Activated naive CD4-positive, alpha-beta T cell treated with anti-CD3 and anti-CD28 coated beads for 36 hours (primary cell): ENCODE measurements at regions of chr3 and their contacts with region 1.

Region 1: GRCh38 chr3:3179407-3180094 is at the start of gene CRBN:
- DNase-seq: peak; percentile 90
- H3K4me3 Mint-ChIP-seq: peak within 1 kb of the TSS; percentile 93
- H3K27ac Mint-ChIP-seq: peak within 1 kb of the TSS; percentile 93
- H3K4me1 Mint-ChIP-seq: peaks cover 47% of the 10 kb centered on the region
- H3K27me3 Mint-ChIP-seq: no peaks in the 10 kb centered on the region
- total RNA-seq, gene CRBN: 44.1 to 48.0 TPM

Region 2: GRCh38 chr3:2765002-2765579 is 414.5 kb before region 1 on chr3:
- CTCF ChIA-PET with region 1: no interaction called
- intact Hi-C with region 1: loop called (anchors 2 kb)
- DNase-seq: peak; percentile 34
- H3K4me3 Mint-ChIP-seq: no peak overlapping the region
- H3K27ac Mint-ChIP-seq: no peak overlapping the region
- H3K4me1 Mint-ChIP-seq: no peaks in the 10 kb centered on the region
- H3K27me3 Mint-ChIP-seq: peaks cover 2% of the 10 kb centered on the region

Region 3: DNA sequence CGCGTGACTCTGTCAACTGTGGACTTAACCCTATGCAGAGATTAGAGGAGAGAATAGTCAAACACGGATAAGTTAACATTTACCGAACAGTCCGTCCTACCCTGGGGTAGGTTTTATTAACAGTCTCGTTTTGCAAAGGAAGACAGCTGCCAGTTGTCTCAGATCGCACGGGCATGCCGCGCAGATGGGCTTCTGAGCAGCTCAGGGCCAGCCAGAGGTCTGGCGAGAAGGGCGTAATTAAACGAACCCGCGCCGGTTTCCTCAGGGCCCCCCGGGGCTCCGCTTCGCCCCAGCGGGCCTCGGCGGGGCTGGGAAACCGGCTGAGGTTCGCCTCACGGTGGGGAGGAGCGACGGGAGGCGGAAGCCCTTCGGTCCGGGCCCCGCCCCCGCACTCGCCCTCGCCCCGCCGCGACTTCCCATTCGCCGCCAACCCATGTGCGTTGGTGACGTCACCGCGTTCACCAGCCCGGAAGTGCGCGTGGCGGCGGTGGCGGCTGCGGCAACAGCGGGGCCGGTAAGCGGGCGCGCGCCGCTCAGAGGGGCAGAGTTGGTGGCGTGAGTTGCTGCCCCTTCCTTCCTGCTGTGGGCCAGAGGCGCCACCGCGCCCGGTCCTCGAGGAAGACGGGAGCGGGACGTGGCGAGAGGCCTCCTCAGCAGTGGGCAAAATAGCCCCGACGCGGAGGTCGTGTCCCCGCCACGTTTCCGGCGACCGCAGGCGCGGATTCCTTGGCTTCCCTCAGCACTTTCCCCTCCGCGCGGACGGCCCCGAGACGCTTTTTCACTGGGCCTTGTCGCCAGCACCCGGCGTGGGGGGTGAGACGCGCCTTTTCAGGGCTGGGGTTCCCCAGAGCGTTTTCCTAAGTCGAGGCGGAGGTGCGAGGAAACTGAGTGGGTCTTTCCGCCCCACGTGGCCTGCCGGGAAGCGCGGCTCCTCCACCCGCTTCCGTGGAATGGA is 52.8 kb before region 1 on chr3 and contains the start of gene TRNT1:
- CTCF ChIA-PET with region 1: interaction called, 6 read pairs
- intact Hi-C with region 1: loop called (anchors 1 kb)
- DNase-seq: peak; percentile 96
- H3K4me3 Mint-ChIP-seq: peak within 1 kb of the TSS; percentile 97
- H3K27ac Mint-ChIP-seq: peak within 1 kb of the TSS; percentile 98
- H3K4me1 Mint-ChIP-seq: peaks cover 36% of the 10 kb centered on the region
- H3K27me3 Mint-ChIP-seq: no peaks in the 10 kb centered on the region
- total RNA-seq, gene TRNT1: 42.3 to 49.4 TPM

Region 4: GRCh38 chr3:3191675-3192285 is 12.2 kb after region 1 on chr3:
- CTCF ChIA-PET with region 1: interaction called, 5 read pairs
- intact Hi-C with region 1: loop called (anchors 1 kb)
- DNase-seq: peak; percentile 26
- H3K4me3 Mint-ChIP-seq: peak overlapping the region; percentile 14
- H3K27ac Mint-ChIP-seq: peak overlapping the region; percentile 64
- H3K4me1 Mint-ChIP-seq: peaks cover 43% of the 10 kb centered on the region
- H3K27me3 Mint-ChIP-seq: no peaks in the 10 kb centered on the region

Region 5: GRCh38 chr3:4303187-4304123 is 1123.9 kb after region 1 on chr3 and contains the start of gene SETMAR:
- CTCF ChIA-PET with region 1: no interaction called
- intact Hi-C with region 1: loop called (anchors 1 kb)
- DNase-seq: peak; percentile 92
- H3K4me3 Mint-ChIP-seq: peak within 1 kb of the TSS; percentile 89
- H3K27ac Mint-ChIP-seq: peak within 1 kb of the TSS; percentile 98
- H3K4me1 Mint-ChIP-seq: peaks cover 27% of the 10 kb centered on the region
- H3K27me3 Mint-ChIP-seq: no peaks in the 10 kb centered on the region
- total RNA-seq, gene SETMAR: 11.6 to 12.6 TPM

Region 6: GRCh38 chr3:5122030-5122740 is 1942.6 kb after region 1 on chr3 and contains the start of gene ARL8B:
- CTCF ChIA-PET with region 1: no interaction called
- intact Hi-C with region 1: loop called (anchors 5 kb)
- DNase-seq: peak; percentile 94
- H3K4me3 Mint-ChIP-seq: peak within 1 kb of the TSS; percentile 90
- H3K27ac Mint-ChIP-seq: peak within 1 kb of the TSS; percentile 90
- H3K4me1 Mint-ChIP-seq: peaks cover 39% of the 10 kb centered on the region
- H3K27me3 Mint-ChIP-seq: no peaks in the 10 kb centered on the region
- total RNA-seq, gene ARL8B: 38.4 to 39.3 TPM